CD4-positive, alpha-beta memory T cell (primary cell): ENCODE measurements at regions of chr16 and their contacts with region 1.

Region 1: GRCh38 chr16:1002399-1003161 is 21.0 kb downstream of the SOX8 start:
- DNase-seq: peak in 3 of 5 donors; percentile 16 to 84 (median 36)
- H3K4me3 ChIP-seq: no peak overlapping the region
- H3K4me3 Mint-ChIP-seq: peak overlapping the region in 7 of 8 donors; percentile 40 to 80 (median 53)
- H3K27ac ChIP-seq: no peak overlapping the region
- H3K27ac Mint-ChIP-seq: peak overlapping the region; percentile 24 to 84 (median 58)
- H3K4me1 ChIP-seq: peaks cover 52% of the 10 kb centered on the region
- H3K4me1 Mint-ChIP-seq: peaks cover 16 to 55% (median 40%) of the 10 kb centered on the region in 4 donors
- H3K27me3 ChIP-seq: no peaks in the 10 kb centered on the region
- H3K27me3 Mint-ChIP-seq: no peaks in the 10 kb centered on the region

Region 2: GRCh38 chr16:964356-965042 is 38.1 kb before region 1 on chr16:
- CTCF ChIA-PET with region 1: interaction called, 6 read pairs
- POLR2A ChIA-PET with region 1: interaction called, 54 read pairs
- intact Hi-C with region 1: loop called (anchors 5 kb)
- DNase-seq: peak; percentile 74 to 92 (median 86)
- H3K4me3 ChIP-seq: peak overlapping the region; percentile 30 to 34
- H3K4me3 Mint-ChIP-seq: peak overlapping the region; percentile 69 to 88 (median 84)
- H3K27ac ChIP-seq: peak overlapping the region; percentile 70
- H3K27ac Mint-ChIP-seq: peak overlapping the region; percentile 79 to 98 (median 95)
- H3K4me1 ChIP-seq: peaks cover 37% of the 10 kb centered on the region
- H3K4me1 Mint-ChIP-seq: peaks cover 23 to 58% (median 44%) of the 10 kb centered on the region in 4 donors
- H3K27me3 ChIP-seq: no peaks in the 10 kb centered on the region
- H3K27me3 Mint-ChIP-seq: no peaks in the 10 kb centered on the region

Region 3: DNA sequence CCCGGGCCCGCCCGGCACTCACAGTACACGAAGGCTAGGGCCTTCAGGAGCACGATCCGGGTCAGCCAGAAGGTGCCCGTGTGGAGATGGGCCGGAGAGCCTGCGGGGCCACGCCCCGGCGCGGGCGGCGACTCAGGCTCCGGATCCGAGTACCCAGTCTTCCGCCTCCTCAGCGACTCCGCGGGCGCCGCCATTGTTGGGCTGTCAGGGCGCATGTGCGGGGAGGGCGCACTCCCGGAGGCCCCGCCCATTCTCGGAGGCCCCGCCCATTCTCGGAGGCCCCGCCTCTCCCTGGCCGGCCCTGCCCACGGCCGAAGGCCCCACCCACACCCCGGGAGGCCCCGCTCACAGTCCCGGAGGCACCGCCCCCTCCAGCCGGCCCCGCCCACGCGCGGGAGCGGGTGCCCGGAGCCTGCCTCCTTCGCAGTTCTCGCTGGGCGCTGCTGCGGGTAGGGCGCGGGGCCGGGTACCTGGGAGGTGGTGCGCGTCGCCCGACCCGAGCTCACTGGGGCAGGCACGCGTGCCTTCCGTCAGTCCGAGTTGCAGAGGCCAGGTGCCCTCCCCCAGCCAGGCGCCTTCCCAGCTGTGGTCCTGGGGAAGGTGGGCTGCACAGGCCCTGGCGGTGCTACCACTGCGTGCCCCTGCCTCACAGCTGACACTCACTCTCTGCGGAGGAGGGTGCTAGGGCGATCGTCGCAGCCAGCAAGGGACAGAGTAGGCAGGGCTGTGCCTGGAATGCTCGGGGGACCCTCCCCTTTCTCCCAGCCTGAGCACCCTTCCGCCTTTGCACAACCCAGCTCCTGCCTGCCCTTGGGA is 31.6 kb before region 1 on chr16 and contains the start of gene LMF1:
- CTCF ChIA-PET with region 1: no interaction called
- POLR2A ChIA-PET with region 1: interaction called, 54 read pairs
- intact Hi-C with region 1: loop called (anchors 2 kb)
- DNase-seq: peak; percentile 92 to 100 (median 93)
- H3K4me3 ChIP-seq: peak within 1 kb of the TSS; percentile 23 to 82
- H3K4me3 Mint-ChIP-seq: peak within 1 kb of the TSS; percentile 67 to 90 (median 76)
- H3K27ac ChIP-seq: peak within 1 kb of the TSS; percentile 81
- H3K27ac Mint-ChIP-seq: peak within 1 kb of the TSS; percentile 28 to 89 (median 71)
- H3K4me1 ChIP-seq: peaks cover 16% of the 10 kb centered on the region
- H3K4me1 Mint-ChIP-seq: peaks cover 12 to 30% (median 21%) of the 10 kb centered on the region in 4 donors
- H3K27me3 ChIP-seq: no peaks in the 10 kb centered on the region
- H3K27me3 Mint-ChIP-seq: no peaks in the 10 kb centered on the region
- total RNA-seq, gene LMF1: 50.0 to 59.7 TPM

Region 4: GRCh38 chr16:982145-983043 is 20.2 kb before region 1 on chr16:
- CTCF ChIA-PET with region 1: interaction called, 3 read pairs
- POLR2A ChIA-PET with region 1: interaction called, 83 read pairs
- intact Hi-C with region 1: loop called (anchors 1 kb)
- DNase-seq: peak in 3 of 5 donors; percentile 33 to 40 (median 34)
- H3K4me3 ChIP-seq: peak overlapping the region in 1 of 2 donors; percentile 19
- H3K4me3 Mint-ChIP-seq: peak overlapping the region; percentile 48 to 73 (median 62)
- H3K27ac ChIP-seq: no peak overlapping the region
- H3K27ac Mint-ChIP-seq: peak overlapping the region in 3 of 7 donors; percentile 47 to 65 (median 57)
- H3K4me1 ChIP-seq: peaks cover 12% of the 10 kb centered on the region
- H3K4me1 Mint-ChIP-seq: peaks cover 6 to 8% (median 7%) of the 10 kb centered on the region in 4 donors
- H3K27me3 ChIP-seq: no peaks in the 10 kb centered on the region
- H3K27me3 Mint-ChIP-seq: peaks cover 0 to 4% of the 10 kb centered on the region in 2 donors

Region 5: GRCh38 chr16:1048442-1049112 is 46.0 kb after region 1 on chr16:
- CTCF ChIA-PET with region 1: no interaction called
- POLR2A ChIA-PET with region 1: no interaction called
- intact Hi-C with region 1: no loop called
- DNase-seq: no peak
- H3K4me3 ChIP-seq: no peak overlapping the region
- H3K4me3 Mint-ChIP-seq: no peak overlapping the region
- H3K27ac ChIP-seq: no peak overlapping the region
- H3K27ac Mint-ChIP-seq: no peak overlapping the region
- H3K4me1 ChIP-seq: no peaks in the 10 kb centered on the region
- H3K4me1 Mint-ChIP-seq: no peaks in the 10 kb centered on the region
- H3K27me3 ChIP-seq: no peaks in the 10 kb centered on the region
- H3K27me3 Mint-ChIP-seq: no peaks in the 10 kb centered on the region